CD4-positive, alpha-beta T cell (primary cell): ENCODE measurements at regions of chr11 and their contacts with region 1.

Region 1: DNA sequence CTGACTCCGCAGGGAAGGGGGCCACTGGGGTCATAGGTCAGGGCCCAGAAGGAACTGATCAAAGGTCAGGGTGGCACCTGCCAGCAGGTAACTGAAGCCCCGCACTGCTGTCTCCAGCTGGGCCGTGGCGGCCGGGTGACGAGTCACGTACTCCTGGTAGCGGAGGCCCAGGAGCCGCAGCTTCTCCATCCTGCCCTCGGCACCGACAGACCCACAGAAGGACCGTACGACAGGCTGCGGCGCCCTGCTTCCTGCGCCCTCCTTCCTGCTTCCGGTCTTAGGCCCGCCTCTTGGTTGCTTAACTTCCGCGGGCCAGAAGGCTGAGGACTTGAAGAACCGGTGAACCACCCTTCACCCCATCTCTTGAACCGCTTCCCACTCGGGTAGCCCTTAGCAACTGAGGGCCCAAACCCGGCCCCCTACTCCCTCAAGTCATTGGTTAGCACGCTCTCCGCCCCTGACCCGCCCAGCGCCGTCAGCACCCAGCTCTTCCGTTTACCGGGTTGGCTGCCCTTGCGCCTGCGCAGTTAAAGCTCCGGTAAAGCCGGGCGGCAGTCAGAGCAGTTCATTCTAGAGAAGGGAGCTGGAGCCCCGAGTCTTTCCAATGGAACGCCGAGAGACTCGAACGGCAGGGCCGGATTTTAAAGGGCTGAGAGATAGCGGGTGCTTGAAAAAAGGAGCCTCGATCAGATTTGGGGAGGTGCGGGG is at the start of gene PEX16:
- DNase-seq: peak; percentile 87 to 99 (median 94)
- ATAC-seq: peak; percentile 89
- H3K4me3 ChIP-seq: peak within 1 kb of the TSS; percentile 93
- H3K4me3 Mint-ChIP-seq: peak within 1 kb of the TSS; percentile 99
- H3K27ac ChIP-seq: peak within 1 kb of the TSS; percentile 90 to 95
- H3K27ac Mint-ChIP-seq: peak within 1 kb of the TSS; percentile 94
- H3K4me1 ChIP-seq: peaks cover 70% of the 10 kb centered on the region
- H3K4me1 Mint-ChIP-seq: peaks cover 54% of the 10 kb centered on the region
- H3K27me3 ChIP-seq: peaks cover 0 to 6% of the 10 kb centered on the region in 2 experiments
- H3K27me3 Mint-ChIP-seq: peaks cover 5% of the 10 kb centered on the region
- CTCF ChIP-seq: no peak
- total RNA-seq, gene PEX16: 56.3 to 62.0 TPM

Region 2: DNA sequence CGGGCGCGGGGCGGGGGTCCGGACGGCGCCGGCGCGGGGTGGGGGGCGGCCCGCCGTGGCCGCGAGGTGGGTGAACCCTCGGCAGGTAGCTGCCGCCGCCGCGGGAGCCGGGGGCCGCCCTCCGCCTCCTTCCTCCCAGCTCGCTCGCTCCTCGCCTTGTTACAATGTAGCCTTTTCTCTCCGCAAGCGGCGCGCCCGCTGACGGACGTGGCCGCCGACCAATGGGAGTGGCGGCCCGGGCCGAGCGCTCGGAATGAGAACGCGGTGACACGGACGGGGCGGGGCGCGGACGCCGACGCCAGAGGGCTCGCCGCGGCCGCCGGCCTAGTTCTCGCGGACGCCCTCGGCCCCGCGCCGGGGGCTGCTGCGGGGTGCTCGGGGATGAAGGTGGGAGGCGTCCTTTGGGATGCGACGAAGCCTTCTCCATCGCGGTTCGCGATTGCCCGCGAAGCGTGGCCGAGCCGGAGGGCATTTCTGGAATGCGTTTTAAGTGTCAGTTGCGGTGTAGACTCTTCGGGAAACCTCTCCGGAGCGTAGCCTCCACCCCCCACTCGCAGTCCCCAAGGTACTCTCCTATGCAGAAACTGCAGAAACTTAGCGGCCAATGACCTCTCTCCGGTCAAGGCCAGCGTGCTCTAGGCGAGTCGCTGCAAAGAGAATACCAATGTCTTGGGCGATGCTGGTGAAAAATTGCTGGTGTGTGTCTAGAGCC is 770.6 kb before region 1 on chr11:
- CTCF ChIA-PET with region 1: no interaction called
- POLR2A ChIA-PET with region 1: no interaction called
- intact Hi-C with region 1: loop called in 1 of 2 experiments (anchors 10 kb)
- DNase-seq: peak; percentile 82 to 96 (median 91)
- ATAC-seq: peak; percentile 97
- H3K4me3 ChIP-seq: peak overlapping the region; percentile 72
- H3K4me3 Mint-ChIP-seq: peak overlapping the region; percentile 96
- H3K27ac ChIP-seq: peak overlapping the region; percentile 37 to 49
- H3K27ac Mint-ChIP-seq: peak overlapping the region; percentile 70
- H3K4me1 ChIP-seq: peaks cover 23% of the 10 kb centered on the region
- H3K4me1 Mint-ChIP-seq: peaks cover 39% of the 10 kb centered on the region
- H3K27me3 ChIP-seq: peaks cover 0 to 10% of the 10 kb centered on the region in 2 experiments
- H3K27me3 Mint-ChIP-seq: peaks cover 24% of the 10 kb centered on the region
- CTCF ChIP-seq: no peak

Region 3: DNA sequence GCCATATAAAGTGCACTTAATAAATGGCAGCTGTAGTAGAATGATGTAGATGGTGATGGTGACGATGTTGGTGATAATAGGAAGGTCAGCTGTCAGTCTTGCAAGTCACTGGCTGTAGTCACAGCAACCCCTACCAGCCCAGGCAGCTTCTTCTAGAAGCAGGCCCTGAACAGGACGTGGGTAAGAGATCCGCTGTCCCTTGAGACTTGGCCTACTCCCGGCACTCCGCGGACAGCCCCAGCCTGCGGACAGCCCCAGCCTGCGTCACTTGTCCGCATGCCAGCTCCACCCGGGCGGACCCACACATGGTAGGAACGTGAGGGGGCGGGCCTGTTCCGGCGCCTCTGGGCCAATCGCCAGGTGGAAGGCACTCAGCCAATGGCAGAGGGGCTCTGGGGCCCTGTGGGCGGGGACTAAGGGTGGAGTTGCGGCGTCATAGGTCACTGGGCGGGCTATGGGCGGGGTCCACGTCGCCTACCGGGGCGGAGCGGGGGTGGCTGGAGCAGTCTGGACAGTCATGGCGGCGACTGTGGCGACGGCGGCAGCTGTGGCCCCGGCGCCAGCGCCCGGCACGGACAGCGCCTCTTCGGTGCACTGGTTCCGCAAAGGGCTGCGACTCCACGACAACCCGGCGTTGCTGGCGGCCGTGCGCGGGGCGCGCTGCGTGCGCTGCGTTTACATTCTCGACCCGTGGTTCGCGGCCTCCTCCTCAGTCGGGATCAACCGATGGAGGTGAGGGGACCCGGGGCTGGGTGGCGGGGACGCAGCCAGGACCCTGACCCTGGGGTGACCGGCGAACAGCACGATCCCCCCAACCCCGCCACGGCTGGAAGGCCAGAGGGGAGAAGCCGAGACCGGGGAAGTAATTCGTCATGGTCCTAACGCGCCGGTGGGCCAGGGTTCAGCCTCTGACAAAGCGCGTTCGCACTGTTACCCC is 70.5 kb before region 1 on chr11 and contains the start of gene CRY2:
- CTCF ChIA-PET with region 1: interaction called, 6 read pairs
- POLR2A ChIA-PET with region 1: interaction called, 43 read pairs
- intact Hi-C with region 1: loop called (anchors 1 to 2 kb)
- DNase-seq: peak; percentile 95 to 99 (median 98)
- ATAC-seq: peak; percentile 77
- H3K4me3 ChIP-seq: peak within 1 kb of the TSS; percentile 94
- H3K4me3 Mint-ChIP-seq: peak within 1 kb of the TSS; percentile 96
- H3K27ac ChIP-seq: peak within 1 kb of the TSS; percentile 91 to 93
- H3K27ac Mint-ChIP-seq: peak within 1 kb of the TSS; percentile 100
- H3K4me1 ChIP-seq: peaks cover 41% of the 10 kb centered on the region
- H3K4me1 Mint-ChIP-seq: peaks cover 70% of the 10 kb centered on the region
- H3K27me3 ChIP-seq: no peaks in the 10 kb centered on the region
- H3K27me3 Mint-ChIP-seq: no peaks in the 10 kb centered on the region
- CTCF ChIP-seq: no peak
- total RNA-seq, gene CRY2: 248 TPM

Region 4: DNA sequence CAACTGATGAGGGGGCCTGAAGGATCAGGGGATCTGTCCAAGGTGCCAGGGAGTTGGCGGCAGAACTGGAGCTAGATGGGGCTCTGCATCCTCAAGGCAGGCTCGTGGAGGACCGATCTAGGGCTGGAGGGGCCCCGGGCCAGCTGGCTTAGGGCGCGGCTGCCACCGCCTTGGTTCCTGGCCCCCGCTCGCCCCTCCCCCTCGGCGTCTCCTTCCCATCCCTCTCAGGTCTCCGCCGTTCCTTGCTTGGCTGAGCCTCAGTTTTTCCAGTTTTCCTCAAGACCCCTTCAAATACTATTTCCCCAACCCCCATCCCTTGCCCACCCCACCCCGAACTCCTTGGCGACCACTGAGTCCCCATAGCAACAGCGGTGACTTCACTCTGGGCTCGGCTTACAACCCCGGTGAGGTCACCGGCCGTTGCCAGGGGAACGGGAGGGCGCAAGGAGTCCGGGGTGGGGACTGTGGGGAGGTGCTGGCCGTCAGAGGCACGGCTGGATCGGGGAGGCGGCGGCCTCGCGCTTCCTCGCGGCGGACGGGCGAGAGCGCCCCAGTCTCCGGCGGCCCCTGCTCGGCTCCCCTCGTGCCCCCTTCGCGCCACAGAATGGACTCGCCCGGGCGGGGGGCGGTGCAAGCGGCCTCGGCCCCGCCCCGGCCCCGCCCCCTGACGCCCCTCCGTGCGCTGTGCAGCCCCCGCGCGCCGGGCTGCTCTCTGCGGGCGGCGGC is 18.2 kb before region 1 on chr11:
- CTCF ChIA-PET with region 1: no interaction called
- POLR2A ChIA-PET with region 1: interaction called, 10 read pairs
- intact Hi-C with region 1: loop called in 1 of 2 experiments (anchors 2 kb)
- DNase-seq: peak in 13 of 14 experiments; percentile 30 to 87 (median 53)
- ATAC-seq: peak; percentile 70
- H3K4me3 ChIP-seq: peak overlapping the region; percentile 34
- H3K4me3 Mint-ChIP-seq: peak overlapping the region; percentile 45
- H3K27ac ChIP-seq: no peak overlapping the region
- H3K27ac Mint-ChIP-seq: no peak overlapping the region
- H3K4me1 ChIP-seq: peaks cover 17% of the 10 kb centered on the region
- H3K4me1 Mint-ChIP-seq: peaks cover 13% of the 10 kb centered on the region
- H3K27me3 ChIP-seq: peaks cover 41 to 53% of the 10 kb centered on the region in 2 experiments
- H3K27me3 Mint-ChIP-seq: peaks cover 53% of the 10 kb centered on the region
- CTCF ChIP-seq: no peak

Region 5: GRCh38 chr11:46593550-46594373 is 676.0 kb after region 1 on chr11 and contains the start of gene AMBRA1:
- CTCF ChIA-PET with region 1: no interaction called
- POLR2A ChIA-PET with region 1: interaction called, 6 read pairs
- intact Hi-C with region 1: loop called in 1 of 2 experiments (anchors 5 kb)
- DNase-seq: peak; percentile 67 to 91 (median 76)
- ATAC-seq: peak; percentile 90
- H3K4me3 ChIP-seq: peak within 1 kb of the TSS; percentile 94
- H3K4me3 Mint-ChIP-seq: peak within 1 kb of the TSS; percentile 92
- H3K27ac ChIP-seq: peak within 1 kb of the TSS; percentile 42 to 55
- H3K27ac Mint-ChIP-seq: peak within 1 kb of the TSS; percentile 85
- H3K4me1 ChIP-seq: peaks cover 33% of the 10 kb centered on the region
- H3K4me1 Mint-ChIP-seq: peaks cover 43% of the 10 kb centered on the region
- H3K27me3 ChIP-seq: no peaks in the 10 kb centered on the region
- H3K27me3 Mint-ChIP-seq: no peaks in the 10 kb centered on the region
- CTCF ChIP-seq: no peak
- total RNA-seq, gene AMBRA1: 29.4 to 31.9 TPM